Vagina (tissue), 2 donors: ENCODE measurements at regions of chr12 and their contacts with region 1.

Region 1: DNA sequence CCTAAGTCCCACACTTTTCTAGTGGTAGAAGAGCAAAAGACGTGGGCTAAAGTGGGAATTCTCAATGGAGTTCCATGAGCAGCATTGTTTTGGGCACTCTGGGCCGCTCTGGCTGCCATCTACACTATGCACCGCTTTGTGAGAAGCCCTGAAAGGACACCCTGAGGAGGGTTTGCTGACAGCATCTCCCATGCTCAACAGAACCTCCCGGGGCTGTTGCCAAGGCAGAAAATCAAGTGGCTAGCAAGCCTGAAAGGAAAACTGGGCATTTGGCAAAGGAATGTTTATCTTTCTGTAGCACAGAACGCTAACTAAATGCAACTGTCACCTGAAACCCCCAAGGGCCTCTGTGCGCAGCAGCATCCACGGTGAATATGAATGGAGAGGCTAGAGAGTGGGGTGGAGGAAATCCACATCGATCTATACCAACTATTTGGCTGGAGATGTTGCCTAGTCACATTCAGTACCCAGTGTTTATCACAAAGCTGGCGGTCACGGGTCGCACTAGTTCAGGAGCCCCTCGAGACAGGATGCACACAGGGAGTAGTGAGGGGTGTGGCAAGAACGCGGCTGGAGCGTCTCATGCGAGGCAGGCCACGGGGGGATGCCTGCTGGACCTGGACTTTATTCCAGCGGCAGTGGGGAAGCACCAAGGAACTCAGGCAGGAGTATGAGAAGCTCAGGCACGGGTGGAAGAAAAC is 14.2 kb downstream of the APPL2 start:
- DNase-seq: peak in 1 of 2 donors; percentile 84
- H3K4me3 ChIP-seq: no peak overlapping the region
- H3K27ac ChIP-seq: peak overlapping the region; percentile 83
- H3K4me1 ChIP-seq: peaks cover 69% of the 10 kb centered on the region
- H3K27me3 ChIP-seq: no peaks in the 10 kb centered on the region
- CTCF ChIP-seq: no peak
- POLR2A ChIP-seq: no peak

Region 2: DNA sequence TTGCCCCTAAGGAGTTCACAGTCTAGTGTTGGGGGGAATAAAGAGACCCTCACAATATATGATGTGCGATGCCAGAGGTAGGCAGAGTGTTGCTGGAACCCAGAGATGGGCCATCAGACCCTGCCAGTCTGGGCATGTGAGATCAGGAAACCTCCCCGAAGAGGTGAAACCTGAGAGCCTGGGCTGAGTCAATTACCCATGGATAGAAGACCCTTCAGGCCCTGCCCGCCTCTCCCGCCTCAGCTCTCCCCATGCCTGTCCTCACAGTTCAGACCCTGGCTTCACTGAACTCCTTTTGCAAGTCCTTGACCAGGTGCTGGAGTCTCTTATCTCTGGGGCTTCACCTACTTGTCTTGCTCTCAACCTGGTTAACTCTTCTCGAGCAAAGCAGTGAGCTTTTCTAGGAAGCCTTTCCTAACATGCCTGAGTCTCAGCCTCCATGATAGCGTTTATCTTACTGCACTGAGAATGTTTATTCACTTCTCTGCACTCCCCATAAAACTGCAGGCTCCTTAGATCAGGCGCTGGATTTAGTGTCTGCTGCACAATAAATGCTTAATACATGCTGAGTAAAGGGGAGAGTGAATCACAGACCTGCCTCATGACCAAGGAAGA is 157.1 kb before region 1 on chr12:
- intact Hi-C with region 1: no loop called
- DNase-seq: no peak
- H3K4me3 ChIP-seq: no peak overlapping the region
- H3K27ac ChIP-seq: no peak overlapping the region
- H3K4me1 ChIP-seq: no peaks in the 10 kb centered on the region
- H3K27me3 ChIP-seq: no peaks in the 10 kb centered on the region
- CTCF ChIP-seq: no peak
- POLR2A ChIP-seq: no peak

Region 3: GRCh38 chr12:105455260-105455659 is 233.5 kb after region 1 on chr12:
- intact Hi-C with region 1: no loop called
- DNase-seq: no peak
- H3K4me3 ChIP-seq: no peak overlapping the region
- H3K27ac ChIP-seq: no peak overlapping the region
- H3K4me1 ChIP-seq: no peaks in the 10 kb centered on the region
- H3K27me3 ChIP-seq: no peaks in the 10 kb centered on the region
- CTCF ChIP-seq: no peak
- POLR2A ChIP-seq: no peak

Region 4: DNA sequence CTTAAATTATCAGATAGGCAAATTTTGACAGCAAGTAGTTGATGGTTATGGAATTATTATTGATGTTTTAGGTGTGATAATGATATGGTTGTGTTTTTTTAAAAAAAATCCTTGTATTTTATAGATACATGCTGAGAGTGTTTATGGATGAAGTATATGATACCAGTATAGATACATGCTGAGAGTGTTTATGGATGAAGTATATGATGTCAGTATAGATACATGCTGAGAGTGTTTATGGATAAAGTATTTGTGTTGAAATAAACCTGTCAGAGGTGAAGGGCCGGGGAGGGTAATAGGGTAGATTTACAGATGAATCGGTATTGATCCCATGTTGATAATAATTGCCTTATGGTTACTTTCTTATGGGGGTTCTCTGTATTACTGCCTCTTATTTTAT is 1355.1 kb after region 1 on chr12:
- intact Hi-C with region 1: loop called (anchors 5 kb)
- DNase-seq: no peak
- H3K4me3 ChIP-seq: no peak overlapping the region
- H3K27ac ChIP-seq: no peak overlapping the region
- H3K4me1 ChIP-seq: peaks cover 12% of the 10 kb centered on the region
- H3K27me3 ChIP-seq: peaks cover 10% of the 10 kb centered on the region
- CTCF ChIP-seq: no peak
- POLR2A ChIP-seq: no peak